Kidney (tissue), 22 donors: ENCODE measurements at regions of chr20 and their contacts with region 1.

Region 1: DNA sequence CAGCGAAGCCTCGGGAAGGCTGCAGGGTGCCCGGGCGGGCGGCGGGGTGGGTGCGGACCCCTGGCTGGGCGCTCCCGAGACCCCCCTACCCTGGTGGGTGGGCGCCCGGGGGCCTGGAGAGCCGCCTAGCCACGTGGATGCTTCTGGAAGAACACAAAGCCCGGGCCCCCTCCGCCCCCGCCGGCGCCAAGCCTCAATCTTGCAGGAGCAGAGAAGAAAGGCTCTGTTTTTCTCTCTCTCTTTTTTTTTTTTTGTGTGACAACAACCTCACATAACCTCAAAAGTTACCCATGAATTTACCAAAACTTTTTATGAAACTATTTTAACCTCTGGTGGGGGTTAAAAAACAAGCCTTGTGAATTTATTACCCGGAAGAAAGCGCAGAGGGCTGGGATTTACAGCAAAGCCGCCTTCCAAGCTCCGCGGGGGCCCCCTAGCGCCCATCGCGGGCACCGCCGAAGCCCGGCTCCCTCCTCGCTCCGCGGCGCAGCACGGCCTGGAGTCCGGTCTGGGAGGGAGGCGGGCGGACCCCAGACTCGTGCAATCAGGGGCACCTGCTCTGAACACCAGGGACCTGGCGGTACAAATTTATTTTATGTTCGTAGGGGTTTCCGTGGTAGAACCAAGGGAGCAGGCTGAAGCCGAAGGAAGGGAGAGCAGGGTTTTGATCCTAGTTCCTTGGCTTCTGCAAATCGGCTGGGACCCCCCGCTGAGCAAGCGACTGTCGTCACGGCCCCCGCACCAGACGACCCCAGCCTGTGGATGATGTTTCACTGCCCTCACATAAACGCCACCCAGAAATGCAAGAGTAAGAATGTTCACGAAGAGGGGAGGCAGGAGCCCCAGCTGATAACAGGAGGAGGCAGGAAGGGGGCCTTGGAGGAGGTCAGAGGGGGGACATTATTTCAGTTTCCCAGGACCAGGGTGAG is 58.9 kb downstream of the ZNF831 start:
- DNase-seq: peak; percentile 90 to 94 (median 90)
- H3K4me3 ChIP-seq: peak overlapping the region in 2 of 3 donors; percentile 18 to 48
- H3K27ac ChIP-seq: no peak overlapping the region
- H3K4me1 ChIP-seq: peaks cover 0 to 4% (median 2%) of the 10 kb centered on the region in 3 donors
- H3K27me3 ChIP-seq: no peaks in the 10 kb centered on the region
- CTCF ChIP-seq: peak; percentile 75

Region 2: GRCh38 chr20:58870239-58871014 is 352.1 kb before region 1 on chr20:
- intact Hi-C with region 1: loop called (anchors 10 kb)
- DNase-seq: peak in 4 of 5 donors; percentile 81 to 89 (median 83)
- H3K4me3 ChIP-seq: no peak overlapping the region
- H3K27ac ChIP-seq: no peak overlapping the region
- H3K4me1 ChIP-seq: no peaks in the 10 kb centered on the region
- H3K27me3 ChIP-seq: no peaks in the 10 kb centered on the region
- CTCF ChIP-seq: peak; percentile 86

Region 3: DNA sequence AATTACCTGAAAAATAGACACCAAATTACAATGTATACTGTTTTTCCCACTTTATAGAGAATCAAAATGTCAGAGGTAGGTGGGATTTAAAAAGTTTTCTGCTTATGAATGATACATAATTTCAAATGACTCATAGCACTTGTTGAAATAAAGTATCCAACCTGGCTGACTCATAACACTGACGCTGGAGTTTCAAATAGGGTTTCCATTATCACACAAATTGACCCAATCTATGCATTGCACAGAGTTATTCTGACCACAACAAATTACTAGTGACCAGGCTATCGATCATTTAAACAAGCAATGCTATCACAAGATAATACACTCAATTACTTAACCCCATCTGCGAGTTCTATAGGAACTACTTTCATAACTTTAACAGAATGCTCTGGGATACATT is 148.1 kb before region 1 on chr20:
- intact Hi-C with region 1: loop called (anchors 10 kb)
- DNase-seq: no peak
- H3K4me3 ChIP-seq: no peak overlapping the region
- H3K27ac ChIP-seq: no peak overlapping the region
- H3K4me1 ChIP-seq: no peaks in the 10 kb centered on the region
- H3K27me3 ChIP-seq: no peaks in the 10 kb centered on the region
- CTCF ChIP-seq: no peak